ENCODE measurements at regions of chr14 and their contacts with region 1.

Region 1: DNA sequence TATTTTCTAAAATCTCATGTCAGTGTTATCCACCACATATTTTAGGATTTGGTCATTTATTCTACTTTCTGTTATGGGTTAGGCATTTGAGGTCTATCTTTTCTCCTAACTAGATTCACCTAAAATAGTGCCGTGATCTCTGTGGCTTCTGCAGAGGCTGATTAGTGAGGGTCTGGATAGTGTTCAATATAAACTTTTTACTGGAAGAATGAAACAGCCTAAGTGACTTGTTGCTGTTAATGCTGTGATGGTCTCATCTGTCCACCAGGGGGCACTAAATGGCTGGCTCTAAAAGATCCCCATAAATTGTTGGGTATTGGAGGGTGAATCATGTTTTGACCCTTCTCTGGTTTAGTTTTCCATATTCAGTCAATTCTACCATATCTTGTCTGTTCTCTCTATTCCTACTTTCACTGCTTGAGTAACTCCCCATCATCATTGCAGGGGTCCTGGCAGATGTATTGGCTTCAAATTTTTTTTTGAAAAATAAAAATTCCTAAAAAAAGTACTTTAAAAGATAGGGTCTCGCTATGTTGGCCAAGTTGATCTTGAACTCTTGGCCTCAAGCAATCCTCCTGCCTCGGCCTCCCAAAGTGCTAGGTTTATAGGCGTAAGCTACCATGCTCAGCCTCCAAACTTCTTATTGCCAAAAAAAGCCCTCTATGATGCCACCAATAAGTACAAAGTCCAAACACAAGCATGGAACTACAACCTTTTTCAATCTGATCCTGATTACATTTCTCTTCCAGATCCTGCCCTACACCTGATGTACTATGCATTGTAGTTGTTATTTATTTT is 6.9 kb downstream of the PABPN1 start:
- DNase-seq: peak; percentile 78
- H3K4me3 Mint-ChIP-seq: no peak overlapping the region
- H3K27ac Mint-ChIP-seq: no peak overlapping the region
- H3K4me1 Mint-ChIP-seq: peaks cover 13% of the 10 kb centered on the region
- H3K27me3 Mint-ChIP-seq: peaks cover 3% of the 10 kb centered on the region

Region 2: DNA sequence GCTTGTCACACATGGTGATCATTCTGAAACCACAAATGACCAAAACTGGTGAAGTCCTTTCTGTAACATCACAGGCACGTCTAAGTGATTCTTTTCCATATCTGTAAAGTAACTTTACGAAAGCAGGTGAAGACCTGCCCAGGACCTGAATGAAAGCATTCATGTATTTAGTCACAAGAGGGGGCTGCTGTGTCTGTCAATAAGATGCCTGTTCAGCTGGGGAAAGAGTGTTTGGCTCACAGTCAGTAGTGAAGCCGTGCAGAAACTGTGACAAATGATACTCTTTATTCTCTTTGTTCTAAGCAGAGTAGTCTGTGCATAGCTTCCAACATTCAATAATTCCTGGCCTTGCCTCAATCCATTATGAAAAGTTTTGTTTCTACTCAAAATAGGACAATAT is 1281.0 kb before region 1 on chr14:
- CTCF ChIA-PET with region 1: no interaction called
- POLR2A ChIA-PET with region 1: no interaction called
- intact Hi-C with region 1: no loop called
- DNase-seq: peak; percentile 35
- H3K4me3 Mint-ChIP-seq: peak overlapping the region; percentile 45
- H3K27ac Mint-ChIP-seq: peak overlapping the region; percentile 76
- H3K4me1 Mint-ChIP-seq: peaks cover 30% of the 10 kb centered on the region
- H3K27me3 Mint-ChIP-seq: no peaks in the 10 kb centered on the region

Region 3: DNA sequence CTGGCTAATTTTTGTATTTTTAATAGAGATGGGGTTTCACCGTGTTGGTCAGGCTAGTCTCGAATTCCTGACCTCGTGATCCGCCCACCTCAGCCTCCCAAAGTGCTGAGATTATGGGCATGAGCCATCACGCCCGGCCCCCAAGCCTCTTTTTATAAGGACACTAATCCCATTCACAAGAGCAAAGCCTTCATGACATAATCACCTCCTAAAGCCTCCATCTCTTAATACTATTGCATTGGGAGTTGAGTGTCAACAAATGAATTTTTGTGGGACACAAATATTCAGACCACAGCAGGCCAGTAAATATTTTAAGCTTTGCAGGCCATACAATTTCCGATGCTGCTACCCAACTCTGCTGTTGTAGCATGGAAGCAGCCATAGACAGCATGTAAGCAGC is 79.5 kb before region 1 on chr14:
- CTCF ChIA-PET with region 1: no interaction called
- POLR2A ChIA-PET with region 1: no interaction called
- intact Hi-C with region 1: no loop called
- DNase-seq: no peak
- H3K4me3 Mint-ChIP-seq: no peak overlapping the region
- H3K27ac Mint-ChIP-seq: no peak overlapping the region
- H3K4me1 Mint-ChIP-seq: no peaks in the 10 kb centered on the region
- H3K27me3 Mint-ChIP-seq: peaks cover 14% of the 10 kb centered on the region

Region 4: GRCh38 chr14:23259426-23259825 is 68.7 kb before region 1 on chr14:
- CTCF ChIA-PET with region 1: interaction called, 3 read pairs
- POLR2A ChIA-PET with region 1: no interaction called
- intact Hi-C with region 1: loop called (anchors 2 kb)
- DNase-seq: no peak
- H3K4me3 Mint-ChIP-seq: no peak overlapping the region
- H3K27ac Mint-ChIP-seq: no peak overlapping the region
- H3K4me1 Mint-ChIP-seq: no peaks in the 10 kb centered on the region
- H3K27me3 Mint-ChIP-seq: peaks cover 17% of the 10 kb centered on the region

Region 5: GRCh38 chr14:23366426-23366921 is 38.3 kb after region 1 on chr14:
- CTCF ChIA-PET with region 1: interaction called, 3 read pairs
- POLR2A ChIA-PET with region 1: no interaction called
- intact Hi-C with region 1: loop called (anchors 5 kb)
- DNase-seq: no peak
- H3K4me3 Mint-ChIP-seq: no peak overlapping the region
- H3K27ac Mint-ChIP-seq: no peak overlapping the region
- H3K4me1 Mint-ChIP-seq: peaks cover 4% of the 10 kb centered on the region
- H3K27me3 Mint-ChIP-seq: peaks cover 27% of the 10 kb centered on the region

Region 6: GRCh38 chr14:23469127-23469905 is 141.2 kb after region 1 on chr14 and contains the start of gene NGDN:
- CTCF ChIA-PET with region 1: no interaction called
- POLR2A ChIA-PET with region 1: no interaction called
- intact Hi-C with region 1: loop called (anchors 1 kb)
- DNase-seq: peak; percentile 95
- H3K4me3 Mint-ChIP-seq: no peak within 1 kb of the TSS
- H3K27ac Mint-ChIP-seq: no peak within 1 kb of the TSS
- H3K4me1 Mint-ChIP-seq: peaks cover 6% of the 10 kb centered on the region
- H3K27me3 Mint-ChIP-seq: no peaks in the 10 kb centered on the region
- total RNA-seq, gene NGDN: 42.1 to 44.1 TPM

Measured in activated CD4-positive, alpha-beta memory T cell treated with anti-CD3 and anti-CD28 coated beads for 36 hours (primary cell).